Activated CD4-positive, alpha-beta memory T cell treated with anti-CD3 and anti-CD28 coated beads for 36 hours (primary cell): ENCODE measurements at regions of chr12 and their contacts with region 1.

Region 1: GRCh38 chr12:14960548-14961465 is 594 bp downstream of the ARHGDIB start:
- DNase-seq: peak; percentile 49
- H3K4me3 Mint-ChIP-seq: peak overlapping the region; percentile 88
- H3K27ac Mint-ChIP-seq: peak overlapping the region; percentile 96
- H3K4me1 Mint-ChIP-seq: peaks cover 43% of the 10 kb centered on the region
- H3K27me3 Mint-ChIP-seq: no peaks in the 10 kb centered on the region

Region 2: GRCh38 chr12:14257734-14258574 is 702.9 kb before region 1 on chr12:
- CTCF ChIA-PET with region 1: no interaction called
- POLR2A ChIA-PET with region 1: no interaction called
- intact Hi-C with region 1: loop called (anchors 5 kb)
- DNase-seq: peak; percentile 97
- H3K4me3 Mint-ChIP-seq: peak overlapping the region; percentile 67
- H3K27ac Mint-ChIP-seq: peak overlapping the region; percentile 99
- H3K4me1 Mint-ChIP-seq: peaks cover 45% of the 10 kb centered on the region
- H3K27me3 Mint-ChIP-seq: no peaks in the 10 kb centered on the region

Region 3: GRCh38 chr12:14394317-14395073 is 566.3 kb before region 1 on chr12:
- CTCF ChIA-PET with region 1: no interaction called
- POLR2A ChIA-PET with region 1: no interaction called
- intact Hi-C with region 1: loop called (anchors 2 kb)
- DNase-seq: peak; percentile 53
- H3K4me3 Mint-ChIP-seq: peak overlapping the region; percentile 74
- H3K27ac Mint-ChIP-seq: peak overlapping the region; percentile 93
- H3K4me1 Mint-ChIP-seq: peaks cover 79% of the 10 kb centered on the region
- H3K27me3 Mint-ChIP-seq: no peaks in the 10 kb centered on the region

Region 4: DNA sequence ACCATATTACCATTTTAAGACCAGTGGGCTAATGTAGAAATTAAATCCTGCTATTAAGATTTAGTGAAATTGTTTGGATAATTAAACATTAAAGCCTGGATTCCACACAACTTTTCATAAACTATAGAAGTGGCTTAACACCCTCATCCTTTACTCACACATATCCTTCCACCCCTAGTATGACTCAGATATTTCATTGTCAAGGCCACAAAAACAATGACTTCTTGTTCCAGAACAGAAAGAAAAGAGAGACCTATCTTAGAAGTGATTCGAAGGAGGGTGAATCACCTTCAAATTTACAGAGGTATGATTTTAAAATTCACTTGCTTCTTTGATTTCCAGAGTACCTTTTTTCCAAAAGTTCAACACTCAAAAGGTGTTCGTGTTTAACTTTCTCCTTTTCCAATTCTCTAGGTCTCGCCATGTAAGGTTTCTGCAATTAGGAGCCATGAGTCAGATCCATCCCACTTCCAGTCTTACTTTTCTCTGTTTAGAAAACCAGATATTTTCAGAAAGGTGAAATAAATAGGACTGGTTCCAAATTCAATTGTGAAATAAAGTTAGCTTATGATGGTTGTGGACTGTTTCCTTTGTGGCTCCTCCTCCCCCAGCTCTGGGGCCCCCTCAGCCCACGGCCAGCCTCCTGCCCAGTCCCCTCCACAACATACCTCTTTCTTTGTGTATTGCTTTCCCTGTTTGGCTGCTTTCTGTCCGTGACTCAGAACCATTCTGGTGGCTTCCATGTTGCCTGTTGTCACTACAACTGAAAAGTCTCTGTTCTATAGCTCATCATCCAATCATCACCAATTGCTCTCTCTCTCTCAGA is 50.5 kb before region 1 on chr12:
- CTCF ChIA-PET with region 1: no interaction called
- POLR2A ChIA-PET with region 1: no interaction called
- intact Hi-C with region 1: loop called (anchors 1 kb)
- DNase-seq: peak; percentile 67
- H3K4me3 Mint-ChIP-seq: peak overlapping the region; percentile 28
- H3K27ac Mint-ChIP-seq: peak overlapping the region; percentile 90
- H3K4me1 Mint-ChIP-seq: peaks cover 37% of the 10 kb centered on the region
- H3K27me3 Mint-ChIP-seq: no peaks in the 10 kb centered on the region

Region 5: DNA sequence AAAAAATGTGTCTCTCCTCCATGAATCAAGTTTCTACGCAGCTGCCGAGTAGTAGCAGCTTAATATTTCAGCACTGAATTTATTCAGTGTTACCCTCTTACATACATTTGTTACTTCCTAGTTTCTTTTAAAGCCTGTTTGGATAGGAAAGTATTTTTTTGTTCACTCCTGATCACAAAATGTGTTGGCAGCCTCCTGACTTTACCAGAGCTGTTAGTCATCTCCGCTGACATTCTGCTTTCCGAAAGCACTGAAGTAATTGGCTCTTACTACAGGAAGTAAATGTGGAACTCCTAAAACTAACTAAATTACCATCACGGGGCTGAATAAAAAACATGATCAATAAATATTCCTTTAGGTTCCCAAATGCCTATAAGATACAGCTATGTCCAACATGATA is 602.9 kb after region 1 on chr12:
- CTCF ChIA-PET with region 1: no interaction called
- POLR2A ChIA-PET with region 1: no interaction called
- intact Hi-C with region 1: loop called (anchors 5 kb)
- DNase-seq: peak; percentile 40
- H3K4me3 Mint-ChIP-seq: peak overlapping the region; percentile 69
- H3K27ac Mint-ChIP-seq: peak overlapping the region; percentile 90
- H3K4me1 Mint-ChIP-seq: peaks cover 58% of the 10 kb centered on the region
- H3K27me3 Mint-ChIP-seq: no peaks in the 10 kb centered on the region